Activated CD4-positive, alpha-beta memory T cell treated with anti-CD3 and anti-CD28 coated beads, Interleukin-2, amount 10 ng/mL, durations not matched to agents 7 days and 5 days (primary cell): ENCODE measurements at regions of chr2 and their contacts with region 1.

Region 1: GRCh38 chr2:230209422-230210051 is 10.2 kb downstream of the SP110 start:
- DNase-seq: no peak
- H3K4me3 Mint-ChIP-seq: no peak overlapping the region
- H3K27ac Mint-ChIP-seq: no peak overlapping the region
- H3K4me1 Mint-ChIP-seq: peaks cover 28% of the 10 kb centered on the region
- H3K27me3 Mint-ChIP-seq: no peaks in the 10 kb centered on the region

Region 2: DNA sequence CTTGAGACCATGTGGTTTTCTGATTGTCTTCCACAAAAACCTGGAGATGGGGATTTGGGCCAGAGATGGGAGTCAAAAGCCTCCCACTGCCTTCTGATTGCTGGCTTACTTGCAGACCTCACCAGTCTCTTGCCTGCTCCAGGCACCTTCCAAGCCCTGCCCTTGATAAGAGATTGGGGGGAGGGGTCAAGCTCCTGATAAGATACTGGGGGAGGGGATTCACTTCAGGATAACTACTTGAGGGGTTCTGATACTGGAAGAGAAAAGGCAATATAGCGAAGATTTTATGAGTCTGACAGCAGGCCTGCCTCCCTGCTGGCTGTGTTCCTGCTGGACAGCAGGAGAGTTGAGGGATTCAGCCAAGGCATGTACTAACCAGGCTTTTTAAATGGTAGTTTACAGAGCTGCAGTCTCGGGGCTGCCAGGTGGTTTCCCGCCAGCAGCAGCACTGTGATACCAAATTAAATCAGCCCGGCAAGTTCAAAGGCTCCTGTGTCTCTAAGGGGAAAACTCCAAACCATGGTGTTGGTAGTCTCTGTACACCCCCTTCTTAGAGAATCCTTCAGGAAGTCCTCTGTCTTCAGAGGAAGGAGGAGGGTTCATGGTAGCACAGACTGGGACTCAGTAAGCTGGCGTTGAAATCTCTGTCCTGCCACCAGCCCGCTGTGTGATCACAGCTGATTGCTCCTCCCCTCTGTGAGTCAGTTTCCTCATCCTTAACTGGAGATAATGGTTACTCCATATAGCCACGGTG is 228.9 kb before region 1 on chr2:
- CTCF ChIA-PET with region 1: no interaction called
- POLR2A ChIA-PET with region 1: no interaction called
- DNase-seq: peak; percentile 38
- H3K4me3 Mint-ChIP-seq: no peak overlapping the region
- H3K27ac Mint-ChIP-seq: peak overlapping the region; percentile 31
- H3K4me1 Mint-ChIP-seq: peaks cover 13% of the 10 kb centered on the region
- H3K27me3 Mint-ChIP-seq: no peaks in the 10 kb centered on the region

Region 3: DNA sequence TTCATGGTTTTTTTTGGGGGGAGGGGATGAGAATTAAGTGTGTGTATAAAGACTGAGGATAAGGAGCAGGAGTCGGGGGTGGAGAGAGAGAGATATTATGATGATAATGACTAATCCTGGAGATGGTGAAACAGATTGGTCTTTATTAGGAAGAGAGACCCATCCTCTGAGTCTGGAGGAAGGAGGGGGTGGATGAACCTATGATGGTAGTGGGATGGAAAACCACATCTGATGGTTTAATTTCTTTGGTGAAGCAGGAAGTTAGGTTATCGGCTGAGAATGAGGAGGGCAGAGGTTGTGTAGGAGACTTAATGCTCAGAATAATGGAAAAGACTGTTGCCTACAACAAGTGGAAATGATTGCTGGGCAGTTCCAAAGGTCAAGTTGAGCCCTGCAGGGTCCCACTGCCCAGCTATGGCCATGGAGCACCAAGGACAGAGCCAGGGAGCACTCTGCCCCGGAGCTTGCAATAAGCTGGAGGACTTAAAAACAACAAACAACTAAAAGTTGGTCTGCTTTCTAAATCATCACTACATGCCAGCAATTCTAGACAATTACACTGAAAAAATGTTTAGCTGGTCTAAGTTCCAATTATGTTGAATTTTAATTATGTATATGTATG is 148.8 kb before region 1 on chr2:
- CTCF ChIA-PET with region 1: no interaction called
- POLR2A ChIA-PET with region 1: no interaction called
- DNase-seq: no peak
- H3K4me3 Mint-ChIP-seq: no peak overlapping the region
- H3K27ac Mint-ChIP-seq: no peak overlapping the region
- H3K4me1 Mint-ChIP-seq: peaks cover 6% of the 10 kb centered on the region
- H3K27me3 Mint-ChIP-seq: peaks cover 15% of the 10 kb centered on the region

Region 4: GRCh38 chr2:230219419-230220331 is 10.1 kb after region 1 on chr2 and contains the start of gene SP110:
- CTCF ChIA-PET with region 1: interaction called, 7 read pairs
- POLR2A ChIA-PET with region 1: interaction called, 25 read pairs
- DNase-seq: peak; percentile 88
- H3K4me3 Mint-ChIP-seq: peak within 1 kb of the TSS; percentile 94
- H3K27ac Mint-ChIP-seq: peak within 1 kb of the TSS; percentile 91
- H3K4me1 Mint-ChIP-seq: peaks cover 75% of the 10 kb centered on the region
- H3K27me3 Mint-ChIP-seq: no peaks in the 10 kb centered on the region
- total RNA-seq, gene SP110: 125 to 128 TPM